Caco-2 (cell line): ENCODE measurements at regions of chr1 and their contacts with region 1.

Region 1: GRCh38 chr1:241213139-241213538 is 143.9 kb downstream of the RGS7 start:
- DNase-seq: peak; percentile 68 to 69
- H3K4me3 ChIP-seq: no peak overlapping the region
- H3K4me3 Mint-ChIP-seq: peak overlapping the region; percentile 64
- H3K27ac Mint-ChIP-seq: peak overlapping the region; percentile 88
- H3K4me1 ChIP-seq: peaks cover 44% of the 10 kb centered on the region
- H3K4me1 Mint-ChIP-seq: peaks cover 34% of the 10 kb centered on the region
- H3K27me3 ChIP-seq: no peaks in the 10 kb centered on the region
- H3K27me3 Mint-ChIP-seq: no peaks in the 10 kb centered on the region
- CTCF ChIP-seq: no peak

Region 2: DNA sequence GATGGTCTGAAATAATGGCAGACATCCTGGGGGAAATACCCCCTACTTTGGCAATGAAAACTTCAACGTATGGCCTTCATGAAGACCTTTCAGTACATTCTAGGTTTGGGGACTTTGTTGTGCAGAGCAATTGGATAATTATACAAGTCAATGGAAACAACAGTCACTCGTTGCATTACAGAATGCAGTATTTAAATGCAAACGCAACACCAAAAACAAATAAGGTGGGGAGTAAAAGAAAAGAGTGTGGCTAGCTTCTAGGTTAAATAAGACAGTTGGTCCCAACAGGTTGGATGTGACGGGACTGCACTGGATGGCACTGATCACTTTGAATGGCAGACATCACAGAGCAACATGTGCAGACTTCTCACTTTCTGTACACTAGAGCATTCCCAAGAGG is 242.9 kb before region 1 on chr1:
- CTCF ChIA-PET with region 1: no interaction called
- POLR2A ChIA-PET with region 1: no interaction called
- intact Hi-C with region 1: no loop called
- DNase-seq: no peak
- H3K4me3 ChIP-seq: no peak overlapping the region
- H3K4me3 Mint-ChIP-seq: no peak overlapping the region
- H3K27ac Mint-ChIP-seq: no peak overlapping the region
- H3K4me1 ChIP-seq: no peaks in the 10 kb centered on the region
- H3K4me1 Mint-ChIP-seq: no peaks in the 10 kb centered on the region
- H3K27me3 ChIP-seq: no peaks in the 10 kb centered on the region
- H3K27me3 Mint-ChIP-seq: no peaks in the 10 kb centered on the region
- CTCF ChIP-seq: no peak

Region 3: GRCh38 chr1:241181471-241181870 is 31.7 kb before region 1 on chr1:
- CTCF ChIA-PET with region 1: no interaction called
- POLR2A ChIA-PET with region 1: no interaction called
- intact Hi-C with region 1: no loop called
- DNase-seq: no peak
- H3K4me3 ChIP-seq: no peak overlapping the region
- H3K4me3 Mint-ChIP-seq: no peak overlapping the region
- H3K27ac Mint-ChIP-seq: no peak overlapping the region
- H3K4me1 ChIP-seq: no peaks in the 10 kb centered on the region
- H3K4me1 Mint-ChIP-seq: no peaks in the 10 kb centered on the region
- H3K27me3 ChIP-seq: no peaks in the 10 kb centered on the region
- H3K27me3 Mint-ChIP-seq: no peaks in the 10 kb centered on the region
- CTCF ChIP-seq: no peak

Region 4: DNA sequence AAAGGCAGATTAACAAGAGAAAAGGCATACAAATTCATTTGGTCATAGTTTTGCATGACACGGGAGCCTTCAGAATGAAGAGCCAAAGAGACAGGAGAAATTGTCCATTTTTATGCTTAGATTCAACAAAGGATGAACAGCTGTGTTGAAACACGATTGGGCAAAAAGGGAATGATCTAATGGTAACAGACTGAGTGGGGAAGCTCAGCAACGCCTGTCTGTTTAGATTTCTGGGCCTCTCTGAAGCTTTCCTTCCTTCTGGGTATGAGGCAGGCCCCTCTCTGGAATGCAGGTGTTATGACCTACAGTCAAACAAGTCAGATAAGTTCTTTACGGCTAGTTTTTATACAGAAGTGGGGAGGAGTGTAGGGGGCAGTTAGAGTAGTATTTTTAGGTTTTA is 10.7 kb before region 1 on chr1:
- CTCF ChIA-PET with region 1: no interaction called
- POLR2A ChIA-PET with region 1: no interaction called
- intact Hi-C with region 1: loop called (anchors 1 kb)
- DNase-seq: peak; percentile 82 to 88
- H3K4me3 ChIP-seq: no peak overlapping the region
- H3K4me3 Mint-ChIP-seq: peak overlapping the region; percentile 32
- H3K27ac Mint-ChIP-seq: peak overlapping the region; percentile 90
- H3K4me1 ChIP-seq: peaks cover 31% of the 10 kb centered on the region
- H3K4me1 Mint-ChIP-seq: peaks cover 52% of the 10 kb centered on the region
- H3K27me3 ChIP-seq: no peaks in the 10 kb centered on the region
- H3K27me3 Mint-ChIP-seq: no peaks in the 10 kb centered on the region
- CTCF ChIP-seq: no peak

Region 5: DNA sequence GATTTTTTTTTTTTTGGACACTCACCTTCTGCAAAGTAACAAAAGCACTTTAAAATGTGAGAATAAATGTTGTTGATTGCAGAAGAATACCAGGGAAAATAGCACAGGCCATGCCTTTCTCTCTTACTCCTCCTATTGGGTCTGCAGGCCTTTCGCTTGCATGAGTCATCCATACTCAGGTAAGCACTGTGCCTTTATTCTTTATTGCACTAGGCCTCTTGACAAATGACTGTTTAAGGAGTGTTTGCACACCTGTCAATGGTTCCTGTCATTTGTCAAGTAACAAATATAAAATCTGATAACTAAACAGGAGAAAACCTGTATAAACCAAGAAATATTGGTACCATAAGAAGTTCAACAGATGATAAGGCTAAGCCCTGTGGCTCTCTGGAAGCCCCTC is 37.3 kb after region 1 on chr1:
- CTCF ChIA-PET with region 1: no interaction called
- POLR2A ChIA-PET with region 1: no interaction called
- intact Hi-C with region 1: loop called (anchors 2 kb)
- DNase-seq: peak; percentile 44 to 53
- H3K4me3 ChIP-seq: no peak overlapping the region
- H3K4me3 Mint-ChIP-seq: no peak overlapping the region
- H3K27ac Mint-ChIP-seq: no peak overlapping the region
- H3K4me1 ChIP-seq: 0 out of 2 replicates have a peak, but pooled peaks cover 6% of the 10 kb centered on the region
- H3K4me1 Mint-ChIP-seq: no peaks in the 10 kb centered on the region
- H3K27me3 ChIP-seq: no peaks in the 10 kb centered on the region
- H3K27me3 Mint-ChIP-seq: no peaks in the 10 kb centered on the region
- CTCF ChIP-seq: no peak